IMR-90 (cell line): ENCODE measurements at regions of chr5 and their contacts with region 1.

Region 1: DNA sequence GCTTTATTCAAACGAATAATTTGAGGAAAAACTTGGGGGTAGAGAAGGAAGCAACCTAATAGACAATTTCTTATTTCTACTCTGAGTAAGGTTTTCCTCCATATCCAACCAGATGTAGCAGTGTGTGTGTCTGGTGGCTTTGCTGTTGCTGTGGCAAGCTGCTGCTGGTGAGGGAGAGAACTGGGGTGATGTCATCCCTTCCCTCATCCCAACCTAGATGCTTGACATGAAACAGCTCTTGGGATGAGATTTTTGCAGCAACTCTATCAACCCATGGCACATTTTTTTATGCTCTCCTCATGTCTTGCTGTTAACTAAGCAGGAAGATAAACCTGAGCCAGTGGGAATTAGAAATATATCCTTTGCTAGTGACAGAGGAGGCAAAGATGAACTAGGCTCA is 135.8 kb downstream of the PCSK1 start:
- DNase-seq: peak; percentile 98
- ATAC-seq: peak; percentile 64
- H3K4me3 ChIP-seq: no peak overlapping the region
- H3K27ac ChIP-seq: peak overlapping the region; percentile 53; the same call in 1 of the 2 replicates
- H3K4me1 ChIP-seq: peaks cover 8% of the 10 kb centered on the region
- H3K27me3 ChIP-seq: no peaks in the 10 kb centered on the region
- CTCF ChIP-seq: no peak
- POLR2A ChIP-seq: peak; percentile 63; the same call in 1 of the 2 replicates
- RAD21 ChIP-seq: peak; percentile 36; the same call in 1 of the 2 replicates

Region 2: GRCh38 chr5:96113170-96113939 is 183.9 kb before region 1 on chr5:
- CTCF ChIA-PET with region 1: no interaction called
- POLR2A ChIA-PET with region 1: no interaction called
- dilution Hi-C with region 1: no loop called
- in situ Hi-C with region 1: no loop called
- intact Hi-C with region 1: loop called (anchors 5 kb)
- DNase-seq: no peak
- ATAC-seq: no peak
- H3K4me3 ChIP-seq: no peak overlapping the region
- H3K27ac ChIP-seq: no peak overlapping the region
- H3K4me1 ChIP-seq: peaks cover 12% of the 10 kb centered on the region
- H3K27me3 ChIP-seq: no peaks in the 10 kb centered on the region
- CTCF ChIP-seq: no peak
- POLR2A ChIP-seq: no peak
- RAD21 ChIP-seq: no peak

Region 3: DNA sequence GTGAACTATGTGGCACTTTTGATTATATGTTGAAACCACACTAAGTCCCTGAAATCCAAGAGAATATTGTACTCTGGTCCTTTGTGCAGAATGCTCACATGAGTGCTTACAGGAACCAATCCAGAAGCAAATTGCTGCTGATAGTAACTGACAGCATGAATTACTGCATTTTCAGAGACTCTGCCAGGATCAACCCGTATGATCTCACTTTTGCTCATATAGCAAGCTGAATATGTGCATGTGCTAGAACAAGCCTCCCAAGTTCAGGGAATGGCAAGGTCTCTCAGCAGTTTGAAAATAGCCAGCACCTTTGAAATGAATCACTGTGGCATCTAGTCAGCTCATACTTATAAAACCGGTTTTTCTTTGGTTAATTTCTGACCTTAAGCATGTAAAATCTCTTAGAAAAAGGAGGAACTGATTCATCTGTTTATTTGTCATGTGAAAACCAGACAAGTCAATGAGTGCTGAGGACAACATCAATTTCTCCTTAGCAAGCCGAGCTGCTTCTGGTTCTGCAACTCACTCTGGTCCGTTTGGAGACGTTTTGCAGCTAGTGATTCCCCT is 119.9 kb before region 1 on chr5:
- CTCF ChIA-PET with region 1: no interaction called
- POLR2A ChIA-PET with region 1: no interaction called
- dilution Hi-C with region 1: no loop called
- in situ Hi-C with region 1: no loop called
- intact Hi-C with region 1: loop called (anchors 10 kb)
- DNase-seq: peak; percentile 91
- ATAC-seq: peak; percentile 55
- H3K4me3 ChIP-seq: no peak overlapping the region
- H3K27ac ChIP-seq: peak overlapping the region; percentile 47; the same call in 1 of the 2 replicates
- H3K4me1 ChIP-seq: peaks cover 19% of the 10 kb centered on the region
- H3K27me3 ChIP-seq: no peaks in the 10 kb centered on the region
- CTCF ChIP-seq: no peak
- POLR2A ChIP-seq: no peak
- RAD21 ChIP-seq: no peak; the same call in 1 of the 2 replicates

Region 4: DNA sequence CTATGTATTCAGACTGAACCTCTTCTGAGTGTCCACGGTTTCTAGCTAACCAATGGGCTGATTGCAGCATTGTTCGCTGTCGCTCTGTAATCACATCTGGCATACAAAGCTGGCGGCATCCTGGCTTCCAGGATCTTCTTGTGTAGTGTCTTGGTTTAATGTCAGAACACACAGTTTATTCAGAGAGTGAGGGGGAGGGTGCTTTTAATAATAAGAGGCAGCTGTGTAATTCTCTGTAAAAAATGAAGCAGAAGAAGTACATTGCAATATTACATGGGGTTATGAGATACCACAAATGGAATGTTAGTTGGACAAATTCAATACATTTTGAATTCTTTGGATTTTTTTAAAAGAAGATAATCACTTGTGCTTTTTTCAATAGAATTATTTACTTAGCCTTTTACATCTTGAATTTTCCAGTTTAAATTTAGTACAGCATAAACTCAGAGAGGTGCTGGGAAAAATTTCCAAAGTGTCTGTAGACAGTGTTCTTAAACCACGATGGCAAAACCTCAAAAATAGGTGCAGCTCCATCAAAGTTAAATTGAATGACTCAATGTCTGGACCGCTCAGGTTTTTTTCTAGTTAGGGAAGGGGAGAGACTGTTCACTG is 70.2 kb before region 1 on chr5:
- CTCF ChIA-PET with region 1: no interaction called
- POLR2A ChIA-PET with region 1: interaction called, 3 read pairs
- dilution Hi-C with region 1: no loop called
- in situ Hi-C with region 1: no loop called
- intact Hi-C with region 1: loop called (anchors 2 kb)
- DNase-seq: peak; percentile 97
- ATAC-seq: peak; percentile 97
- H3K4me3 ChIP-seq: no peak overlapping the region
- H3K27ac ChIP-seq: peak overlapping the region; percentile 100
- H3K4me1 ChIP-seq: peaks cover 9% of the 10 kb centered on the region
- H3K27me3 ChIP-seq: no peaks in the 10 kb centered on the region
- CTCF ChIP-seq: no peak
- POLR2A ChIP-seq: no peak
- RAD21 ChIP-seq: peak; percentile 8; the same call in 1 of the 2 replicates

Region 5: DNA sequence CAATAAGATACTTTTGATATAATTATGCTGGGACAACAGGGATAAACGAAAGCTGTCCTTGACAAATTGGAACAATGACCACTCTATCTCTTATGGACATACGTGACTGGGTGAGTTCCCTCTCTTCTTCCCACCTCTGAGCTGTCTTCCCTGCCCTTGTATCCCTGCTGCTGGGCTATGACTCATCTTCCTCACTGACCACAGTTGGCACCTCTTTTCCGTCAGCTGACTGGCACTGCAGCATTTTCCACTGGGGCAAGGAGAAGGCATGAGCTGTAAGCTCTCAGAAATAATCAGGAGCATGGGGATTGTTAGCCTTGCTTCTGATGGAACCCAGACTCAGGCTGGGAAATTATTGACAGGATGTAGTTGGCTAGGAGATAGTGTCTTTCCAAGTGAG is 87.1 kb after region 1 on chr5:
- CTCF ChIA-PET with region 1: no interaction called
- POLR2A ChIA-PET with region 1: no interaction called
- dilution Hi-C with region 1: no loop called
- in situ Hi-C with region 1: no loop called
- intact Hi-C with region 1: no loop called
- DNase-seq: peak; percentile 67
- ATAC-seq: peak; percentile 70
- H3K4me3 ChIP-seq: no peak overlapping the region
- H3K27ac ChIP-seq: no peak overlapping the region
- H3K4me1 ChIP-seq: peaks cover 6% of the 10 kb centered on the region; the same call in 1 of the 2 replicates
- H3K27me3 ChIP-seq: peaks cover 2% of the 10 kb centered on the region; the same call in 1 of the 2 replicates
- CTCF ChIP-seq: no peak
- POLR2A ChIP-seq: no peak
- RAD21 ChIP-seq: no peak

Region 6: GRCh38 chr5:96402500-96402899 is 105.2 kb after region 1 on chr5:
- CTCF ChIA-PET with region 1: no interaction called
- POLR2A ChIA-PET with region 1: no interaction called
- dilution Hi-C with region 1: no loop called
- in situ Hi-C with region 1: no loop called
- intact Hi-C with region 1: no loop called
- DNase-seq: no peak
- ATAC-seq: no peak
- H3K4me3 ChIP-seq: no peak overlapping the region
- H3K27ac ChIP-seq: no peak overlapping the region
- H3K4me1 ChIP-seq: no peaks in the 10 kb centered on the region
- H3K27me3 ChIP-seq: peaks cover 8% of the 10 kb centered on the region
- CTCF ChIP-seq: no peak
- POLR2A ChIP-seq: no peak
- RAD21 ChIP-seq: no peak